ENCODE measurements at regions of chr10 and their contacts with region 1.

Region 1: GRCh38 chr10:74640134-74640931 is 186.1 kb upstream of the KAT6B start:
- DNase-seq: no peak
- CTCF ChIP-seq: no peak

Region 2: DNA sequence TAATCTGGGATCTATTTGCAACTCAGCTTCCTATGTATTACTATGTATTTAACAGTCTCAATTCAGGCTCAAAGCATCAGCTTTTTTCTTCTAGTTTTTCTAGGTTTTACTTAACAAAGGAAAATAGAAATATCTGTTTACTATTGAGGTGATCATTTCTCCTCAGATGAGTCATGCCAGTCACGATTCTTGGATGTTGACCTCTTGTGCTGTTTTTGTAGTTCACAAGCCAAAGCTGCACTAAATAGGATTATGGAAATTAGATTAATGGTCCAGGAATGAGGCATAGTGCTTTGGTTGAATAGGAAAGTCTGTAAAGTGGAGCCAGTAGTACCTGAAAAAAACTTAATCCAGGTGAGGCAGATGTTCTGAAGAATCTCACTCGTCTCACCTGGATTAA is 12.2 kb before region 1 on chr10:
- CTCF ChIA-PET with region 1: interaction called, 26 read pairs
- POLR2A ChIA-PET with region 1: no interaction called
- DNase-seq: no peak
- CTCF ChIP-seq: no peak

Region 3: DNA sequence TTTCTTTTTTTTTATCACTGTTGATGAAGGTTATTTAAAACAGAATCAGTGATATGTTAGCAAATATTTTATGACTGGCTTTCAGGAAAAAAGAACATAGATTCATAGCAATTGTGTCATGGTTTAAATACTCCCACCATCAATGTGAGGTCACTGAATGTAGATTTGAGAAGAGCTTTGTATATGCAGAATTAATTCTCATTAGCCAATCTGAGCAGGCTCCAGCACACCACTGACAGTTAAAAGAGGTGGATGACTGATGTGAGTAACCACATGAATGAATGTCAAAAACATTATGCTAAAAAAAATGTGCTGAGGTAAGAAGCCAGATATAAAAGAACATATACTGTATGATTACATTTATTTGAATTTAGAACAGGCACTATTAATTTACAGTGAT is 11.2 kb after region 1 on chr10:
- CTCF ChIA-PET with region 1: interaction called, 18 read pairs
- POLR2A ChIA-PET with region 1: no interaction called
- DNase-seq: no peak
- CTCF ChIP-seq: no peak

Region 4: DNA sequence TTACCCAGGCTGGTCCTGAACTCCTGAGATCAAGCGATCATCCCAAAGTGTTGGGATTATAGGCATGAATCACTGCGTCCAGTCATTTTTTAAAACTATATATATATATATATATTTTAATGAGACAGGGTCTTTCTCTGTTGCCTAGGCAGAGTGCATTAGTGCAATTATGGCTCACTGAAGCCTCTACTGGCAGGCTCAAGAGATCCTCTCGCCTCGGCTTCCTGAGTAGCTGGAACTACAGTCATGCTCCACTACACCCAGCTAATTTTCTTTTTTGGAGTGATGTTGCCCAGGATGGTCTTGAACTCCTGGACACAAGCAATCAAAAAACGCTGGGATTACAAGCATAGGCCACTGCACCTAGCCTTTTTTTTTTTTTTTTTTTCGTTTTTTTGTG is 130.7 kb after region 1 on chr10:
- CTCF ChIA-PET with region 1: no interaction called
- POLR2A ChIA-PET with region 1: no interaction called
- DNase-seq: no peak
- CTCF ChIP-seq: no peak

Measured in GM10248 (cell line).